AG04450 (cell line): ENCODE measurements at regions of chr12 and their contacts with region 1.

Region 1: DNA sequence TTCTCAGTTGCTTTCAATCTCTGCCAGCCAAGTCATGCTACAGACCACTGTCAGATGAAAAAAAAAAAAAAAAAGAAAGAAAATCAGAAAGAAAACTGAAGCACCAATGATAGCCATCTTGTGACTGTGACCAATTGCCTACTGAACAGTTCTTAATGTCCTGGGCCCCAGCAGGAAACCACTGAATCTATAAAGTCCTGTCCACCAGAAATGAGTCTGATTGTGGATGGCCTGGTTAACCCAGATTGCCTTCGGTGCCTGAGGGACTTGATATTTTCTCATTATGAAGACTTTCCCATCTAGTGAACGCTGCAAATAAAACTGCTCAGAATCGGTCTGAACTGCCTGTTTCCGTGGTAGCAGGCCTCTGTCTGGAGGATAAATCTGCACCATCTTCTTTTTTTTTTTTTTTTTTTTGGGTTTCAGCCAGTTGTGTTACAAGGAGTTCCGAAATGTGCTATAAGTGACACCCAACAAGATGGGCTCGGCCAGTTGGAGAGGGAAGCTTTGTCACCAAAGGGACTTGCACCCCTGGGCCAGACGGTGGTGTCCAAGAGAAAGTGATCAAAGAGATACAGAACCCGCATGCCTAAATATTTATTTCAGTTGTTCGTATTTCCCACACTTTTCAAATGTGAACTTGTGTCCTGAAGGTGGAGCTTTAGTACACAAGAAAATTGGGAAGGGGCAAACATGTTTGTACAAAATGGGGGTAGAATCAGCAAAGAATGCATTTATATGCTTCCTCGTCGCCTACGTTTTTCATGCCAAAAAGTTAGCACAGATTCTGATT is 3.0 kb upstream of the PLXNC1 start:
- DNase-seq: no peak
- H3K4me3 ChIP-seq: no peak overlapping the region
- H3K27ac ChIP-seq: no peak overlapping the region
- H3K27me3 ChIP-seq: peaks cover 65% of the 10 kb centered on the region
- CTCF ChIP-seq: peak; percentile 49

Region 2: DNA sequence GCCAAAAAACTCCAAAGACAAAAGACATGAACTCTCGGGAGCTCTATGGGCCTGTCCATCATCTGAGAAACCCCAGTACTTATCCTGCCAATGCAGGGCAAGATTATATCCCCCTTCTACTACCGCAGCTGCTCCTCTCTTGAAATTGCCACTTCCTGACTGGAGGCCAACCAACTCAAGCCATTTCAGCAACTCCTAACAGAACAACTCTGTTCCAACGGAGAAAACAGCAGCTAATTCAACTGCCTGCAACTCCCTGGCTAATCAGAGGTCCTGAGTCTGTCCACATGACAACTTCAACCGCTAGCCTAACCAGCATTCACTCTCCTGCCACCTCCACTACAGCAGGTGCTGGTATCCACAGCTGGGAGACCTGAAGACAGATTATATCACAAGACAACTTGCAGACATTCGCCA is 290.1 kb after region 1 on chr12:
- CTCF ChIA-PET with region 1: interaction called, 36 read pairs
- POLR2A ChIA-PET with region 1: interaction called, 3 read pairs
- DNase-seq: no peak
- H3K4me3 ChIP-seq: no peak overlapping the region
- H3K27ac ChIP-seq: no peak overlapping the region
- H3K27me3 ChIP-seq: no peaks in the 10 kb centered on the region
- CTCF ChIP-seq: no peak

Region 3: DNA sequence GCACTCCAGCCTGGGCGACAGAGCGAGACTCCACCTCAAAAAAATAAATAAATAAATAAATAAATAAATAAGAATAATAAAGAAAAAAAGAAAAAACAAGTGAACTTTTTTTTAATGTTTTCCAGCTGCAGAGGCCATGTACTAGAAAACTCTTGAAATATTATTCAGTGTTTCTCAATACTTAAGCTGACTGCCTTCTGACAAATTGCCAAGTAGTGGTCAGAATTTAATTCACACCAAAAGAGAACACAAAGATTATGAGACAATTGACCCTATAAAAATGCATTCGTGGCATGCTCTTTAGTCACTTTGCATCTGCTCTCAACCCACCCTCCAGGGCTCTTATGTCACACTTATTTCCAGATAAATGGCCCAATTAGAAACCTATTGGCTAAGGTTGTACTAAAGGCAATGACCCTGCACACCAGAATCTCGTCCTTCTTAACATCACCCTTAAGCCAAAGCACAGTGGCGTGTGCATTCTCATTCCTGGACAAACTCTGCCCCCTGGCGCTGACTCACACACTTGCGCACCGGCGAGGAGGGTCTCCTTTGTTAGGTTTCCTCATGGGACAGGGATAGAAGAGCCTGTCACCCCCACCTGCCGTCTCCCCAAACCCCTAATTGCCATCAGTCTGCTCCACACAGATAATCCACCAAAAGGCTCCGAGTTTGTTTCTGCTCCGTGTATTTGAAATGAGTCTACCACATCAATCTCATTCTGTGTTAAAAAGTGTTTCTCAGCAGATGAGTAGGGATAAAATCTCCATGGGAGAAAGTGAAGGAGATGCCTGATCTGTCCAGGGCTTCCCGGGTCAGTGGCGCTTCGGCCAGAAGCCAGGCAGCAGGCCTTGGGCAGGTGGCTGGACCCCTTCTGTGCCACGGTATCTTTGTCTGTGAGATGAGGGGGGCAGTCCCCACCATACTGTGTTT is 387.4 kb after region 1 on chr12:
- CTCF ChIA-PET with region 1: interaction called, 10 read pairs
- POLR2A ChIA-PET with region 1: no interaction called
- DNase-seq: peak; percentile 20
- H3K4me3 ChIP-seq: no peak overlapping the region
- H3K27ac ChIP-seq: no peak overlapping the region
- H3K27me3 ChIP-seq: peaks cover 10% of the 10 kb centered on the region
- CTCF ChIP-seq: peak; percentile 85